Caco-2 (cell line): ENCODE measurements at regions of chr4 and their contacts with region 1.

Region 1: GRCh38 chr4:94621491-94622080 is 136.2 kb upstream of the BMPR1B start:
- DNase-seq: peak in 1 of 2 experiments; percentile 47
- H3K4me3 ChIP-seq: no peak overlapping the region
- H3K4me3 Mint-ChIP-seq: no peak overlapping the region
- H3K27ac Mint-ChIP-seq: no peak overlapping the region
- H3K4me1 ChIP-seq: no peaks in the 10 kb centered on the region
- H3K4me1 Mint-ChIP-seq: peaks cover 13% of the 10 kb centered on the region
- H3K27me3 ChIP-seq: no peaks in the 10 kb centered on the region
- H3K27me3 Mint-ChIP-seq: no peaks in the 10 kb centered on the region
- CTCF ChIP-seq: peak; percentile 53 to 57

Region 2: DNA sequence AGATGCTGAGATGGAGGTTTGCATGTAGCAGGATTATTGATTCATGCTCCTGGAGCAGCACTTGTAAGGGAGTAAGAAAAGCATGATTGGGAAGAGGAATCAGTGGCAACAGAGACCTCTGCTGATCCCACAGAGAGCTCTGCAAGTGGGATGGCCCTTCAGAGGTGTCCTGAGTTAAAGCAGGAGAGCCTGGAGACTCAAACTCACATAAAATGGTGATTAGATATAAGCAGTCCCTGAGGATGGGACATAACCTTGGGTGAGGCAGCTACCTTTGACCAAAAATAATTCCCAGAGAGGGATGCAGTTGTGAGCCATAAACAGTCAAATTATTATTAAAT is 110.7 kb after region 1 on chr4:
- CTCF ChIA-PET with region 1: no interaction called
- POLR2A ChIA-PET with region 1: no interaction called
- intact Hi-C with region 1: loop called (anchors 1 kb)
- DNase-seq: no peak
- H3K4me3 ChIP-seq: no peak overlapping the region
- H3K4me3 Mint-ChIP-seq: no peak overlapping the region
- H3K27ac Mint-ChIP-seq: no peak overlapping the region
- H3K4me1 ChIP-seq: no peaks in the 10 kb centered on the region
- H3K4me1 Mint-ChIP-seq: peaks cover 6% of the 10 kb centered on the region
- H3K27me3 ChIP-seq: no peaks in the 10 kb centered on the region
- H3K27me3 Mint-ChIP-seq: peaks cover 6% of the 10 kb centered on the region
- CTCF ChIP-seq: no peak

Region 3: DNA sequence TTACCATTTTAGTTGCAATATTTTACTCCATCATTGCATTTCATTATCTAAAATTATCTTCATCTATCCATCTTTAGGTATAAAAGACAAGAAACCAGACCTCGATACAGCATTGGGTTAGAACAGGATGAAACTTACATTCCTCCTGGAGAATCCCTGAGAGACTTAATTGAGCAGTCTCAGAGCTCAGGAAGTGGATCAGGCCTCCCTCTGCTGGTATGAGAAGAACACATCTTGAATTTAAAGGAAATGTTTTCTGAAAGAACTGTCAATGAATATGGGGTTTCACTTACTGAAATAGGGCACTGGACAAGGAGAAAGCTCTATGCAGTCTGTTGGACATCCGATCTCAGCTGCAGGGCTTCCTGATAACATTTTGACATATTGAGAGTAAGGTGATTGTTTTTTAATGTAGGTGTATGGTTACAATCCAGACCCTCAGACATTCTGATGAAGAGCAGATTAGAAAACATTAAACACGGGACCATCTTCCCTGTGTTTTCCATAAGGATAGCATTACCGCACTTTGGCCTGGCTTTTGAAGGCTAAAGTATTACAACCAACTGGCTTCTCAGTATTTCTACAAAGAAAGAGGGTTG is 503.4 kb after region 1 on chr4:
- CTCF ChIA-PET with region 1: no interaction called
- POLR2A ChIA-PET with region 1: no interaction called
- intact Hi-C with region 1: loop called (anchors 1 kb)
- DNase-seq: peak in 1 of 2 experiments; percentile 43
- H3K4me3 ChIP-seq: no peak overlapping the region
- H3K4me3 Mint-ChIP-seq: no peak overlapping the region
- H3K27ac Mint-ChIP-seq: no peak overlapping the region
- H3K4me1 ChIP-seq: no peaks in the 10 kb centered on the region
- H3K4me1 Mint-ChIP-seq: no peaks in the 10 kb centered on the region
- H3K27me3 ChIP-seq: no peaks in the 10 kb centered on the region
- H3K27me3 Mint-ChIP-seq: no peaks in the 10 kb centered on the region
- CTCF ChIP-seq: peak; percentile 56 to 58